ENCODE measurements at regions of chrX and their contacts with region 1.

Region 1: DNA sequence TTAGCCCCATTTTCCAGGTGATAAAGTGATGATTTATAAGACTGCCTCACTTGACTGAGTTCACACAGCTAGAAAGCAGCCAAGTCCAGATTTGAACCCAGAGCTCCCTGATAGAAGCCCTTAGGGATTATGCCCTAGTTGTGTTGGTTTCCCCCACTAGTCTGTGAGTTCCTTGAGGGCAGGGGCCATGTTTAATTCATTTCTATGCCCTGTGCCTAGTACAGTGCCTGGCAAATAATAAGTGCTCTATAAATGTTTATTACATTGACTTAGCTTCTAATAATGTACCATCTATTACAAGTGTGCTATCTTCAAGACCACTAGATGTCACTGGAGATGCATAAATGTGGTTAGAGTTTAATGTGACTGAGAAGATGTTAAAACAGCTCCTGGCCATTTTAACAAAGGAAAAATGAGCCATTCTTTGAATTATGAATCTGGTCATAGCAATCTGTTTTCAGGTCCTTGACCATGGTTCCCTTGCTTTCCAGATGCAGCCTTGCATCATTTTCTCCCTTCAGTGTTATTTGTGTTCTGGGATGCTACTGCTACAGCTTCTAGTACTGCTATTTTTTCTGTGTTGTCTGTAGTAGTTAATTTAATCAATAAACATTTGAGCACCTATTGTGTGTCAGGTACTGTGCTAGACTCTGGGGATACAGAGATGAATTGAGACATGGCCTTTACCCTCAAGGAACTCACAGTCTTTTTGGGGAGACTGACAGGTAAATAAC is 43.2 kb downstream of the SLC9A6 start:
- DNase-seq: peak in 1 of 2 experiments; percentile 58
- H3K4me3 ChIP-seq: no peak overlapping the region
- H3K27ac ChIP-seq: no peak overlapping the region
- H3K4me1 ChIP-seq: no peaks in the 10 kb centered on the region
- H3K27me3 ChIP-seq: no peaks in the 10 kb centered on the region
- CTCF ChIP-seq: peak; percentile 87

Region 2: DNA sequence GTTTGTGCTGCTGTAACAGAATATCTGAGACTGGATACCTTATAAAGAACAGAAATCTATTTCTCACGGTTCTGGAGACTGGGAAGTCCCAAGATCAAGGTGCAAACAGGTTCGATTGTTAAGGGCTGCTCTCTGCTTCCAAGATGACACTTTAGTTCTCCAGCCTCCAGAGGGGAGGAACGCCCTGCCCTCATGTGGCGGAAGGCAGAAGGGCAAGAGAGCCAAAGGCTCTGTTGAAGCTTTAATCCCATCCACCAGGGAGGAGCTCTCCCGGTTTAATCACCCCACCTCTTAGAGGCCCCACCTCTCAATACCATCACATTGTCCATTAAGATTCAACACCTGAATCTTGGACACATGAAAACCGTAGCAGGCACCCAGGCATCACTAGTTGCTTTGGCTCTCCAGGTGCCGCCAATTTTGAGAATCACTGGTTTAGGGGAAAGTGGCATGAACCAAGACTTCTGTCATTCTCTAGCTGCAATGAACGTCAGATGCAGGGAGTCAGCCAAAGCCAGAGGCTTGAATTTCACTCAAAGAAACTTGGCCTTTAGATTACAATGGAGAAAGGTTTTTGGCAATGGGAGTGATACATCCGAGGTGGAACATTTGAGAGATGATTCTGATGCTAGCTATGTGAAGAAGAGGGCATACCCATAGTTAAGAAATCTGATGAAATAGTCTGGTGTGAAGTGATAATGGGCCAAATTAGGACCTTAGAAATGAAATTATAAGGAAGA is 134.6 kb after region 1 on chrX:
- CTCF ChIA-PET with region 1: interaction called, 29 read pairs
- POLR2A ChIA-PET with region 1: no interaction called
- intact Hi-C with region 1: loop called (anchors 1 kb)
- DNase-seq: peak; percentile 56 to 57
- H3K4me3 ChIP-seq: no peak overlapping the region
- H3K27ac ChIP-seq: no peak overlapping the region
- H3K4me1 ChIP-seq: peaks cover 18% of the 10 kb centered on the region
- H3K27me3 ChIP-seq: no peaks in the 10 kb centered on the region
- CTCF ChIP-seq: peak; percentile 83

Region 3: GRCh38 chrX:136200466-136200865 is 172.0 kb after region 1 on chrX:
- CTCF ChIA-PET with region 1: interaction called, 3 read pairs
- POLR2A ChIA-PET with region 1: no interaction called
- intact Hi-C with region 1: loop called (anchors 5 kb)
- DNase-seq: peak in 1 of 2 experiments; percentile 62
- H3K4me3 ChIP-seq: no peak overlapping the region
- H3K27ac ChIP-seq: no peak overlapping the region
- H3K4me1 ChIP-seq: peaks cover 36% of the 10 kb centered on the region
- H3K27me3 ChIP-seq: no peaks in the 10 kb centered on the region
- CTCF ChIP-seq: peak; percentile 70

Region 4: DNA sequence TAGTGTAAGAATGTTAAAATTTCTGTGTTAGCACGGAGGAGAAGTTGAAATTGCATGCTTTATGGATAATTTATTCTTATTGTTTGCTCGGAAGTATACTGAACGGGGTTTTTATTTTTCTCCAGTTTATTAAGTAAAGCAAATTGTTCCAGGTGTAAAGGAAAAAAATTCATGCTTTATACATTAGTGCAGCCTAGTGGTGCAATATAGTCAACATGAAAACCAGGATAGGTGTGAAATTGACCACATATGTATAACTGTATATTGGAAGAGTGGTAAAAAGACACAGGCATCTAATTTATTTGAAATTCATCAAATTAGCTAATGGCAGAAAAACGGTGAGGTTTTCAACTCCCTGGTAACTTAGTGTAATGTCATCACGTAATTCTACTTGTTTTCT is 460.3 kb after region 1 on chrX:
- CTCF ChIA-PET with region 1: no interaction called
- POLR2A ChIA-PET with region 1: no interaction called
- intact Hi-C with region 1: loop called (anchors 2 kb)
- DNase-seq: no peak
- H3K4me3 ChIP-seq: no peak overlapping the region
- H3K27ac ChIP-seq: no peak overlapping the region
- H3K4me1 ChIP-seq: no peaks in the 10 kb centered on the region
- H3K27me3 ChIP-seq: no peaks in the 10 kb centered on the region
- CTCF ChIP-seq: peak; percentile 64

Region 5: GRCh38 chrX:136694431-136695087 is 666.1 kb after region 1 on chrX:
- CTCF ChIA-PET with region 1: no interaction called
- POLR2A ChIA-PET with region 1: no interaction called
- intact Hi-C with region 1: loop called (anchors 5 kb)
- DNase-seq: peak in 1 of 2 experiments; percentile 57
- H3K4me3 ChIP-seq: no peak overlapping the region
- H3K27ac ChIP-seq: no peak overlapping the region
- H3K4me1 ChIP-seq: peaks cover 17% of the 10 kb centered on the region
- H3K27me3 ChIP-seq: no peaks in the 10 kb centered on the region
- CTCF ChIP-seq: peak; percentile 90